OCI-LY7 (cell line): ENCODE measurements at regions of chr14 and their contacts with region 1.

Region 1: GRCh38 chr14:89303457-89304435 is 113.3 kb downstream of the FOXN3 start:
- DNase-seq: peak; percentile 94
- H3K4me3 ChIP-seq: peak overlapping the region; percentile 65
- H3K27ac ChIP-seq: peak overlapping the region; percentile 99
- H3K4me1 ChIP-seq: peaks cover 65% of the 10 kb centered on the region
- CTCF ChIP-seq: no peak

Region 2: DNA sequence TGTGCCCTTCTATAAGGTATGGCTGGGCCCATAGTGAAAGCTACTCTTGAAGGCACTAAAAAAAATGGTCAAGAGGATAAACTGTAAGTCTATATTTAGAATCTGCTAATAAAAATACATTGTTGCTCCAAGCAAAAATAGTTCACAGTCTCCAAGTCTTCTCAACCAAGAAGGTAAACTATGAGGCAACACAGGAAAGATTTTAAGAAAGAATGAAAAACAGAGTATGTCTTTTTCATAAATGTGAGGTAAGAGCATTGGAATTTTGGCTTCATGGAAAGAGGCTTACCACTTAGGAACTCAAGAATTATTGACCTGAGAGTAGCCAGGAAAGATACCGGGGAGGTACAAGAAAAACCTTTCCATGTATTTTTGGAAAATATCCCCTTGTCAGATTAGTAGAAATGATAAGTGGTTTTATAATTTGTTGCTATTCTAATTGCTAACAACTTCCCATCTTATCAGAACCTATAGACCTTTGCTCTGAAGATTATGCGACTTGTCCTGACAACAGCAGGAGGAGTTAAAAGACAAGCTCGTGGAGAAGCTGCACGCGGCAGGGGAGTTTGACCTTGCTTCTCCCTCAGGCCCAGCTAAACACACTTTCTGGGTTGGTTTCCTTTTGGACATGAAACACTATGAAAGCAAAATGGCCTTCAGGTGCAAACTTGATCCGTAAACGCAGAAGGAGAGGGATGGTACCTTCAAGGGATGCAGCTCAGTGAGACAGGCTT is 124.8 kb before region 1 on chr14:
- CTCF ChIA-PET with region 1: no interaction called
- POLR2A ChIA-PET with region 1: no interaction called
- intact Hi-C with region 1: loop called (anchors 5 kb)
- DNase-seq: no peak
- H3K4me3 ChIP-seq: no peak overlapping the region
- H3K27ac ChIP-seq: no peak overlapping the region
- H3K4me1 ChIP-seq: peaks cover 10% of the 10 kb centered on the region
- CTCF ChIP-seq: no peak

Region 3: GRCh38 chr14:89351516-89352404 is 48.0 kb after region 1 on chr14:
- CTCF ChIA-PET with region 1: interaction called, 4 read pairs
- POLR2A ChIA-PET with region 1: interaction called, 9 read pairs
- intact Hi-C with region 1: loop called (anchors 5 kb)
- DNase-seq: peak; percentile 83
- H3K4me3 ChIP-seq: peak overlapping the region; percentile 57
- H3K27ac ChIP-seq: peak overlapping the region; percentile 80
- H3K4me1 ChIP-seq: peaks cover 73% of the 10 kb centered on the region
- CTCF ChIP-seq: no peak

Region 4: GRCh38 chr14:89384023-89384422 is 80.3 kb after region 1 on chr14:
- CTCF ChIA-PET with region 1: interaction called, 3 read pairs
- POLR2A ChIA-PET with region 1: interaction called, 10 read pairs
- intact Hi-C with region 1: loop called (anchors 1 kb)
- DNase-seq: peak; percentile 98
- H3K4me3 ChIP-seq: peak overlapping the region; percentile 53
- H3K27ac ChIP-seq: peak overlapping the region; percentile 91
- H3K4me1 ChIP-seq: peaks cover 81% of the 10 kb centered on the region
- CTCF ChIP-seq: no peak

Region 5: GRCh38 chr14:89618811-89619551 is 315.2 kb after region 1 on chr14:
- CTCF ChIA-PET with region 1: no interaction called
- POLR2A ChIA-PET with region 1: interaction called, 3 read pairs
- intact Hi-C with region 1: loop called (anchors 2 kb)
- DNase-seq: peak; percentile 86
- H3K4me3 ChIP-seq: peak overlapping the region; percentile 81
- H3K27ac ChIP-seq: peak overlapping the region; percentile 74
- H3K4me1 ChIP-seq: peaks cover 58% of the 10 kb centered on the region
- CTCF ChIP-seq: peak; percentile 13; the same call in 1 of the 2 replicates